Activated CD8-positive, alpha-beta memory T cell treated with anti-CD3 and anti-CD28 coated beads, Interleukin-2, amount 10 ng/mL, durations not matched to agents 7 days and 5 days (primary cell): ENCODE measurements at regions of chr18 and their contacts with region 1.

Region 1: DNA sequence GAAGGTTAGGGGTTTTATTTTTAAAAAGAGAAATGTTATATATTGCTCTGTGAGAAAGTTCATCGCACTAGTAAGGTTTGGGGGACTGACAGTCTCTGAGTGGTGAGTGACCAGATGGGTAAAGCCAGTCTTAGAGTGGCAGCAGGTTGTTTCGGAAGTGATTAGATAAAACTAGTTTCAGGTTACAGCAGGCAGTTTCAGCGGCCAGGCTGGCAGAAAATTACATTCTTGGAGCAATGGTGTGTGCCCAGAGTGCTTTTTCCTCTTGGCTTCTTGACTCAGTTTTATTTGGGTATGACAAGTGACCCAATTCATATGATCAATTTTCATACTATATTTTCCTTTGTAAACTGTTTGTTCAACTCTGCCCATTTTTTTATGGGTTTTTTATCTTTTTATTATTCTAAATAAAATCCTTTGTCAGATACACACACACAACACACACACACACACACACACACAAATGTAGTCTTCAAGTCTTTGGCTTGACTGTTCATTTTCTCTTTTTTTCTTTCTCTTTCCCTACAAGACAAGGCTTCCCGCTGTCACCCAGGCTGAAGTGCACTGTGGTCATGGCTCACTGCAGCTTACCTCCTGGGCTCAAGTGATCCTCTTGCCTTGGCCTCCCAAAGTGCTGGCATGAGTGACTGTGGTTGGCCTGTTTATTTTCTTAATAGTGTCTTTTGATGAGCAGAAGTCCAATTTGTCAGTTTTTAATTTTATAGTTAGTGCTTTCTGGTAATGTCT is 30.9 kb downstream of the RALBP1 start:
- DNase-seq: no peak
- ATAC-seq: no peak
- H3K4me3 Mint-ChIP-seq: no peak overlapping the region
- H3K27ac Mint-ChIP-seq: no peak overlapping the region
- H3K4me1 Mint-ChIP-seq: peaks cover 4% of the 10 kb centered on the region
- H3K27me3 Mint-ChIP-seq: no peaks in the 10 kb centered on the region

Region 2: GRCh38 chr18:9516437-9517064 is 10.3 kb after region 1 on chr18:
- CTCF ChIA-PET with region 1: interaction called, 10 read pairs
- DNase-seq: no peak
- ATAC-seq: no peak
- H3K4me3 Mint-ChIP-seq: no peak overlapping the region
- H3K27ac Mint-ChIP-seq: peak overlapping the region; percentile 15
- H3K4me1 Mint-ChIP-seq: peaks cover 13% of the 10 kb centered on the region
- H3K27me3 Mint-ChIP-seq: no peaks in the 10 kb centered on the region